Mammary epithelial cell (primary cell): ENCODE measurements at regions of chr17 and their contacts with region 1.

Region 1: DNA sequence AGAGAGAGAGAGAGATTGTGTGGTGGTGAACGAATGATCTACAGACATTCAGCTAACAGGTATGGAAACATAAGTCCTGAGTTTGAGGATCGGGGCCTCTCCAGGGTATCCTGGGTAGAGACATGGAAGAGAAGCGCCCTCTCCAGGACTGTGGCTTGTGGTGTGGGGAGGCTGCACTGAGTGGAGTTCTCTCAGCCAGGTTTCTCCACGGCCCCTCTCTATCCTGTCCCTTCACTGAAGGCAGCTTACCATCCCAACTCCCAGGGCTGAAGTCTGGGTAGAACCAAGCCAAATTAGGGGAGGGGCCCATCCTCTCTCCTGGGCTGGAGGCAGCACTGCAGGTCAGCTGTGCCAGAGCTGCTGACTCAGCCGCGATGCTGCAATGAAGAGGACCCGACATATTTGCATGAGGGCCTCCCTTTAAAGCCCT is 6.2 kb downstream of the C1QL1 start:
- DNase-seq: no peak
- H3K4me3 ChIP-seq: no peak overlapping the region
- H3K27ac ChIP-seq: no peak overlapping the region
- H3K4me1 ChIP-seq: peaks cover 14% of the 10 kb centered on the region
- H3K27me3 ChIP-seq: peaks cover 5% of the 10 kb centered on the region
- CTCF ChIP-seq: no peak

Region 2: GRCh38 chr17:44655983-44656710 is 305.8 kb before region 1 on chr17 and contains the start of gene MEIOC:
- CTCF ChIA-PET with region 1: no interaction called
- dilution Hi-C with region 1: no loop called
- in situ Hi-C with region 1: no loop called
- intact Hi-C with region 1: no loop called
- DNase-seq: peak; percentile 9
- H3K4me3 ChIP-seq: peak within 1 kb of the TSS in 2 of 3 experiments; percentile 1 to 7
- H3K27ac ChIP-seq: no peak within 1 kb of the TSS
- H3K4me1 ChIP-seq: no peaks in the 10 kb centered on the region
- H3K27me3 ChIP-seq: peaks cover 13% of the 10 kb centered on the region
- CTCF ChIP-seq: no peak
- total RNA-seq, gene MEIOC: 0.17 TPM in 1 of 2 donors, not detected in the other

Region 3: GRCh38 chr17:44872131-44872768 is 89.7 kb before region 1 on chr17:
- CTCF ChIA-PET with region 1: no interaction called
- dilution Hi-C with region 1: no loop called
- in situ Hi-C with region 1: no loop called
- intact Hi-C with region 1: no loop called
- DNase-seq: no peak
- H3K4me3 ChIP-seq: no peak overlapping the region
- H3K27ac ChIP-seq: no peak overlapping the region
- H3K4me1 ChIP-seq: no peaks in the 10 kb centered on the region
- H3K27me3 ChIP-seq: no peaks in the 10 kb centered on the region
- CTCF ChIP-seq: no peak

Region 4: GRCh38 chr17:44919885-44920564 is 41.9 kb before region 1 on chr17:
- CTCF ChIA-PET with region 1: no interaction called
- dilution Hi-C with region 1: no loop called
- in situ Hi-C with region 1: no loop called
- intact Hi-C with region 1: no loop called
- DNase-seq: peak; percentile 66
- H3K4me3 ChIP-seq: no peak overlapping the region
- H3K27ac ChIP-seq: no peak overlapping the region
- H3K4me1 ChIP-seq: peaks cover 30% of the 10 kb centered on the region
- H3K27me3 ChIP-seq: no peaks in the 10 kb centered on the region
- CTCF ChIP-seq: peak; percentile 82 to 90

Region 5: DNA sequence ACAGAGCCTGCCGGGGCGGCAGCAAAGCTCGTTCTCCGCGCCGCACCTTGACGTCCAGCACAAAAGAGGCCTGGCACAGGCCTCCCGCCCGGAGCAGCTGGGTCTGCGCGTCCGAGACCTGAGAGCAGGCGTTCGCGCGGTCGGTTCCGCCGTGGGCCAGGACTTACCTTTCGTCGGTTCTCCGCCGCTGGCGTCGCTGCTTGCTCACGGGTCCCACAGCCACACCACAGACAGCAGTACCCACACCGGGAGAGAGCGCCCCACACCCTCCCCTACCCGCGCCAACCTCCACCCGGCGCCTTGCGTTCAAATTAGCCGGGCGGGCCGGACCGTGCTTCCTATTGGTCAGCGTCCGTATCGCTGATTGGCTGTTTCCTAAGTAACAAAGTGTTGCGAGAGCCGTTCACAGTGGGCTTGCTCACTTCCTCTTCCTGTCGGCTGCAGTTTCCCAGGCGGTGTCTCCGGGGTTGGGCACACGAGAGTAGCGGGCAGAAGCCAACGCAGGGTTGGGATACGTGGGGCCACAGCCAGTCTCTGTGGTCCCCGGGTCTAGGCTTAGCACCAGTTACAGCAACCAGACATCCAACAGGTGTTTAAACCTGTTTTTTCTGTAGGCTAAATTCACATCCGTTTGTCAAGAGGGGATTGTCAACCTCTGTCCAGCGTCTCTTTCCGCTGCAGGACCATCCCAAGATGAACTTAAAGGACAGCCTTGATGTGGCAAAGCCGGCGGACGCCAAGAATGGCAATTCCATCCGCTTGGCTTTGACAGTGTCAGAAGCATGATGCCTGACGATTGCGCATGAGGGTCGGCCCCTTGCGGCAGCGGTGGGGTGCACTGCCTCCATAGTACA is 14.2 kb before region 1 on chr17 and contains the start of gene KIF18B:
- CTCF ChIA-PET with region 1: no interaction called
- dilution Hi-C with region 1: no loop called
- in situ Hi-C with region 1: no loop called
- intact Hi-C with region 1: no loop called
- DNase-seq: peak; percentile 93
- H3K4me3 ChIP-seq: peak within 1 kb of the TSS; percentile 90 to 98 (median 92)
- H3K27ac ChIP-seq: peak within 1 kb of the TSS; percentile 72
- H3K4me1 ChIP-seq: peaks cover 14% of the 10 kb centered on the region
- H3K27me3 ChIP-seq: no peaks in the 10 kb centered on the region
- CTCF ChIP-seq: no peak
- total RNA-seq, gene KIF18B: under 0.01 to 25.2 TPM

Region 6: DNA sequence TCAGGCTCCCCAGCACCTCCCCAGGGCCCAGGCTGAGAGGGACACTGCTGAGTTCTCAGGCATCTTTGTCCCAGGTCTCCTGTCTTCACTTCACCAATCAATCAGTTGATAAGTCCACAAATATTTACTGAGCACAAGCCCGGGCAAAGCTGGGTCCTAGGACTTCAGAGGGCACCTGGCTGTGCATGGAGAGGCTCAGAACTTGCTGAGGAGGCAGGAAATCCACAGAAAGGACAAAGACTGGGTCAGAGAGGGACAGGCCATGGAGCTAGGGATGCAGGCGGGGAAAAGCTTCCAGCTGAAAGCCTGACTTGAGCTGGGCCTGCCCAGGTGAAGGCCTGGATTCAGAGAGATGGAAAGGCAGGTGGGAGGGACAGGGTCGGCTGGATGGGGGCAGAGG is 39.4 kb after region 1 on chr17:
- CTCF ChIA-PET with region 1: no interaction called
- dilution Hi-C with region 1: loop called (anchors 5 kb)
- in situ Hi-C with region 1: no loop called
- intact Hi-C with region 1: no loop called
- DNase-seq: no peak
- H3K4me3 ChIP-seq: no peak overlapping the region
- H3K27ac ChIP-seq: no peak overlapping the region
- H3K4me1 ChIP-seq: no peaks in the 10 kb centered on the region
- H3K27me3 ChIP-seq: no peaks in the 10 kb centered on the region
- CTCF ChIP-seq: no peak

Region 7: GRCh38 chr17:45021607-45022287 is 59.8 kb after region 1 on chr17:
- CTCF ChIA-PET with region 1: no interaction called
- dilution Hi-C with region 1: loop called (anchors 5 kb)
- in situ Hi-C with region 1: no loop called
- intact Hi-C with region 1: no loop called
- DNase-seq: peak; percentile 39
- H3K4me3 ChIP-seq: peak overlapping the region in 1 of 3 experiments; percentile 24
- H3K27ac ChIP-seq: no peak overlapping the region
- H3K4me1 ChIP-seq: peaks cover 14% of the 10 kb centered on the region
- H3K27me3 ChIP-seq: no peaks in the 10 kb centered on the region
- CTCF ChIP-seq: peak; percentile 57 to 71